SK-N-SH (cell line): ENCODE measurements at regions of chr5 and their contacts with region 1.

Region 1: DNA sequence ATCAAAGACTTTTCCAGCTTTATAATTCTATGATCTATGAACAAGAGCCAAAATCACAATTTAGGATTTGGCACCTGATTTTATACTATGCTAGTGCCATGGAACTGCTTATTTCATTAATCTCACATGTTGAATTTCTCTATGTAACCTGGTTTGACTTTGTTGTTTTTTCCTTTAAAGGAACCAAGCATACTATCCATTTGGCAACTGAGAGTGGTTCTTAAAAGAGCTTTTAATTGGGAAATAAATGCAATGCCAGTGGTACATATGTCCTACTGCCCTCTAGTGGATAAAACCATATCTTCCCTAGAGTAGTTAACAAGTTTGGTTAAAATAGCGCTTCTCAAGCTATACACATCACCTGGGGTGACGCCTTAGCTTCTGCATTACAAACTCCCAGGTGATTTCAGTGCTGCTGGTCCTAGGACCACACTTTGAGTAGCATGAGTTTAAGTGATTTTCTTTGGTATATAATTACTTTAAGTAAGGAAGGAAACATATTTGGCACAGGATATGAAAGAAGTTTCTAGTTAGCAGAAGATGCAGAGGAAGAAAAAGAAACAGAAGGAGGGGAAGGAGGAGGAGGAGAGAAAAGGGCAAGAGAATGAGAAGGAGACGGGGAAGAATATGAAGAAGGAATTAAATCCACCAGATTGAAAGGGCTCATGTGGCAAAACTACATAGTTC is 56.8 kb downstream of the FGF10 start:
- DNase-seq: peak; percentile 8
- H3K4me3 ChIP-seq: no peak overlapping the region
- H3K27ac ChIP-seq: no peak overlapping the region
- H3K4me1 ChIP-seq: no peaks in the 10 kb centered on the region
- H3K27me3 ChIP-seq: no peaks in the 10 kb centered on the region
- CTCF ChIP-seq: peak; percentile 77
- EP300 ChIP-seq: no peak
- RAD21 ChIP-seq: peak; percentile 52

Region 2: GRCh38 chr5:44321144-44321725 is 11.2 kb before region 1 on chr5:
- CTCF ChIA-PET with region 1: interaction called, 11 read pairs
- POLR2A ChIA-PET with region 1: no interaction called
- DNase-seq: no peak
- H3K4me3 ChIP-seq: no peak overlapping the region
- H3K27ac ChIP-seq: no peak overlapping the region
- H3K4me1 ChIP-seq: no peaks in the 10 kb centered on the region
- H3K27me3 ChIP-seq: no peaks in the 10 kb centered on the region
- CTCF ChIP-seq: no peak
- EP300 ChIP-seq: no peak
- RAD21 ChIP-seq: no peak

Region 3: GRCh38 chr5:44356231-44356630 is 23.8 kb after region 1 on chr5:
- CTCF ChIA-PET with region 1: interaction called, 15 read pairs
- POLR2A ChIA-PET with region 1: no interaction called
- DNase-seq: no peak
- H3K4me3 ChIP-seq: no peak overlapping the region
- H3K27ac ChIP-seq: no peak overlapping the region
- H3K4me1 ChIP-seq: no peaks in the 10 kb centered on the region
- H3K27me3 ChIP-seq: no peaks in the 10 kb centered on the region
- CTCF ChIP-seq: no peak
- EP300 ChIP-seq: no peak
- RAD21 ChIP-seq: no peak

Region 4: GRCh38 chr5:44809956-44810420 is 477.6 kb after region 1 on chr5:
- CTCF ChIA-PET with region 1: no interaction called
- POLR2A ChIA-PET with region 1: no interaction called
- DNase-seq: no peak
- H3K4me3 ChIP-seq: peak overlapping the region; percentile 94 to 99
- H3K27ac ChIP-seq: peak overlapping the region; percentile 43 to 50; a peak in 2 of 4 replicates
- H3K4me1 ChIP-seq: peaks cover 0 to 12% of the 10 kb centered on the region in 2 experiments; a peak in 3 of 4 replicates
- H3K27me3 ChIP-seq: no peaks in the 10 kb centered on the region
- CTCF ChIP-seq: no peak
- EP300 ChIP-seq: no peak
- RAD21 ChIP-seq: no peak